H1 (cell line): ENCODE measurements at regions of chr9 and their contacts with region 1.

Region 1: GRCh38 chr9:132260846-132261245 is 93.9 kb downstream of the SETX start:
- DNase-seq: no peak
- H3K4me3 ChIP-seq: no peak overlapping the region
- H3K27ac ChIP-seq: no peak overlapping the region
- H3K4me1 ChIP-seq: no peaks in the 10 kb centered on the region
- H3K27me3 ChIP-seq: no peaks in the 10 kb centered on the region
- CTCF ChIP-seq: no peak
- EP300 ChIP-seq: no peak
- POLR2A ChIP-seq: no peak
- RAD21 ChIP-seq: no peak

Region 2: GRCh38 chr9:132249123-132249522 is 11.7 kb before region 1 on chr9:
- CTCF ChIA-PET with region 1: interaction called, 24 read pairs
- POLR2A ChIA-PET with region 1: no interaction called
- DNase-seq: no peak
- H3K4me3 ChIP-seq: no peak overlapping the region
- H3K27ac ChIP-seq: no peak overlapping the region
- H3K4me1 ChIP-seq: peaks cover 0 to 12% (median 2%) of the 10 kb centered on the region in 4 experiments; a peak in 3 of 7 replicates
- H3K27me3 ChIP-seq: no peaks in the 10 kb centered on the region; a peak in 2 of 7 replicates
- CTCF ChIP-seq: no peak
- EP300 ChIP-seq: no peak
- POLR2A ChIP-seq: no peak
- RAD21 ChIP-seq: no peak